Activated B cell treated with CpG ODN at 0.5 μM for 24 hours (primary cell): ENCODE measurements at regions of chr7 and their contacts with region 1.

Region 1: DNA sequence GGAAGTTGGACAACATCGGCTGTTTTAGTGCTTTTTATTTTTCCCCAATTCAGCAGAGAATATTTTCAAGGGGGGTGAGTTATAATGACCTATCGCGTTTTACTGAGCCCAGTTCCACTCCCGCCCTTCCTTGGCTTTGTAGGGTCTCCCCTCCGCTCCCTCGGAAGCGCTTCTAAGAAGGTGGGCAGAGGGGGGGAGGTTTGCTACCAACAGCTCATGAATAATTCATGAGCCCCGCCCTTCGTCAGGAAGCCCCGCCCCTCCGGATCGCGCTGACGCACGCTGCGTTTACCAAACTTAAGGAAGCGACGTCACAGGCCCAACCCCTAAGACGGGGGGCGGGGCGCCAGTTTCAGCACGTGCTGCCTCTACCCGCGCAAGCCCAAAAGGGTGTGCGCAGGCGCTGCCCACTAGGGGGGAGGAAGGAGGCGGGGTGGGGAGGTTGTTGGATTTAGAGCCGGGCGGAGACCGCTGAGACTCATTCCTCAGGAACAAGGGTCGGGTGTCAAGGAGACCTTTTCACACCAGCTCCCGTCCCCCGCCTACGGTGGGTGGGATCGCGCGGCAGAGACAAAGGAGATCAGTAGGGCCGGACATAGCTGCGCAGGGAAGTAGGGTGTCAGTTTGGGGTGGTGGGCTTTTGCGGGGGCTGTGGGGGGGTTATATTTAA is 529 bp upstream of the MEPCE start:
- DNase-seq: peak; percentile 100
- ATAC-seq: peak; percentile 58
- H3K4me3 Mint-ChIP-seq: peak overlapping the region; percentile 98
- H3K27ac Mint-ChIP-seq: peak overlapping the region; percentile 100
- H3K4me1 Mint-ChIP-seq: peaks cover 45% of the 10 kb centered on the region
- H3K27me3 Mint-ChIP-seq: no peaks in the 10 kb centered on the region
- CTCF ChIP-seq: no peak

Region 2: DNA sequence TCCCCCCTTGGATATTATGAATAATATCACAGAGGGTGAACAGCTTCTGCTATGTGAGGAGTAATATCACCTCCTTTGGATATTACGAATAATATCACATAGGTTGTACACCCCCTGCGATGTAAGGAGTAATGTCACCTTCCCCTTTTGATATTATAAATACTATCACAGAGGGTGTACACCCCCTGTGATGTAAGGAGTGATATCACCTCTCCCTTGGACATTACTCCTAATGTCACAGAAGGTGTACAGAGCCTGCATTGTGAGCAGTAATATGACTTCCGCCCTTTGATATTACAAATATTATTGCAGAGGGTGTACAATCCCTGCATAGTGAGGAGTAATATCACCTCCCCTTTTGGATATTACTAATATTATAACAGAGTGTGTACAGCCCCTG is 840.2 kb before region 1 on chr7:
- CTCF ChIA-PET with region 1: no interaction called
- POLR2A ChIA-PET with region 1: no interaction called
- intact Hi-C with region 1: no loop called
- DNase-seq: no peak
- ATAC-seq: no peak
- H3K4me3 Mint-ChIP-seq: no peak overlapping the region
- H3K27ac Mint-ChIP-seq: no peak overlapping the region
- H3K4me1 Mint-ChIP-seq: no peaks in the 10 kb centered on the region
- H3K27me3 Mint-ChIP-seq: no peaks in the 10 kb centered on the region
- CTCF ChIP-seq: no peak

Region 3: GRCh38 chr7:100126931-100127865 is 301.9 kb before region 1 on chr7 and contains the start of gene MBLAC1:
- CTCF ChIA-PET with region 1: no interaction called
- POLR2A ChIA-PET with region 1: interaction called, 11 read pairs
- intact Hi-C with region 1: loop called (anchors 2 kb)
- DNase-seq: peak; percentile 81
- ATAC-seq: peak; percentile 85
- H3K4me3 Mint-ChIP-seq: peak within 1 kb of the TSS; percentile 100
- H3K27ac Mint-ChIP-seq: peak within 1 kb of the TSS; percentile 100
- H3K4me1 Mint-ChIP-seq: peaks cover 41% of the 10 kb centered on the region
- H3K27me3 Mint-ChIP-seq: no peaks in the 10 kb centered on the region
- CTCF ChIP-seq: no peak
- total RNA-seq, gene MBLAC1: 1.9 and 2.2 TPM in 2 replicates

Region 4: DNA sequence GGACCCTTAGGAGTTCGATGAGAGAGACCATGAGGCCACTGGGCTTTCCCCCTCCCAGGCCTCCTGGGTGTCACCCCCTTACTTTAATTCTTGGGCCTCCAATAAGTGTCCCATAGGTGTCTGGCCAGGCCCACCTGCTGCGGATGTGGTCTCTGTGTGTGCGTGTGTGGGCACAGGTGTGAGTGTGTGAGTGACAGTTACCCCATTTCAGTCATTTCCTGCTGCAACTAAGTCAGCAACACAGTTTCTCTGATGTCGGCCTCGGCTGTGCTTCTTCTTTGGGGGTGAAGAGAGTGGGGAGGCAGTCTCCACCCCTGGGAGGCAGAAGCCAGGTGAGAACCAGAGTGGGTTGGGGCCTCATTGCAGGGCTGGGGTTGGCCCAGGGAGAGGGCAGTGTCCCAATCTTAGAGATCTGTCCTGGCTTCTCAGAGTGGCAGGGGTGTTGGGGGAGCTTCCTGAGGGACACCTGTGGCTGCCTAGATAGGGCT is 207.8 kb before region 1 on chr7:
- CTCF ChIA-PET with region 1: no interaction called
- POLR2A ChIA-PET with region 1: interaction called, 6 read pairs
- intact Hi-C with region 1: loop called (anchors 2 kb)
- DNase-seq: peak; percentile 48
- ATAC-seq: peak; percentile 40
- H3K4me3 Mint-ChIP-seq: peak overlapping the region; percentile 86
- H3K27ac Mint-ChIP-seq: peak overlapping the region; percentile 95
- H3K4me1 Mint-ChIP-seq: peaks cover 84% of the 10 kb centered on the region
- H3K27me3 Mint-ChIP-seq: no peaks in the 10 kb centered on the region
- CTCF ChIP-seq: no peak

Region 5: GRCh38 chr7:100407285-100408180 is 21.6 kb before region 1 on chr7:
- CTCF ChIA-PET with region 1: interaction called, 16 read pairs
- POLR2A ChIA-PET with region 1: interaction called, 34 read pairs
- intact Hi-C with region 1: no loop called
- DNase-seq: no peak
- ATAC-seq: peak; percentile 96
- H3K4me3 Mint-ChIP-seq: no peak overlapping the region
- H3K27ac Mint-ChIP-seq: no peak overlapping the region
- H3K4me1 Mint-ChIP-seq: peaks cover 7% of the 10 kb centered on the region
- H3K27me3 Mint-ChIP-seq: no peaks in the 10 kb centered on the region
- CTCF ChIP-seq: peak; percentile 54

Region 6: GRCh38 chr7:100478966-100479665 is 50.0 kb after region 1 on chr7 and contains the start of gene TSC22D4:
- CTCF ChIA-PET with region 1: no interaction called
- POLR2A ChIA-PET with region 1: interaction called, 38 read pairs
- intact Hi-C with region 1: loop called (anchors 1 kb)
- DNase-seq: peak; percentile 81
- ATAC-seq: peak; percentile 73
- H3K4me3 Mint-ChIP-seq: peak within 1 kb of the TSS; percentile 93
- H3K27ac Mint-ChIP-seq: peak within 1 kb of the TSS; percentile 86
- H3K4me1 Mint-ChIP-seq: peaks cover 41% of the 10 kb centered on the region
- H3K27me3 Mint-ChIP-seq: no peaks in the 10 kb centered on the region
- CTCF ChIP-seq: no peak
- total RNA-seq, gene TSC22D4: 60.2 and 68.7 TPM in 2 replicates

Region 7: DNA sequence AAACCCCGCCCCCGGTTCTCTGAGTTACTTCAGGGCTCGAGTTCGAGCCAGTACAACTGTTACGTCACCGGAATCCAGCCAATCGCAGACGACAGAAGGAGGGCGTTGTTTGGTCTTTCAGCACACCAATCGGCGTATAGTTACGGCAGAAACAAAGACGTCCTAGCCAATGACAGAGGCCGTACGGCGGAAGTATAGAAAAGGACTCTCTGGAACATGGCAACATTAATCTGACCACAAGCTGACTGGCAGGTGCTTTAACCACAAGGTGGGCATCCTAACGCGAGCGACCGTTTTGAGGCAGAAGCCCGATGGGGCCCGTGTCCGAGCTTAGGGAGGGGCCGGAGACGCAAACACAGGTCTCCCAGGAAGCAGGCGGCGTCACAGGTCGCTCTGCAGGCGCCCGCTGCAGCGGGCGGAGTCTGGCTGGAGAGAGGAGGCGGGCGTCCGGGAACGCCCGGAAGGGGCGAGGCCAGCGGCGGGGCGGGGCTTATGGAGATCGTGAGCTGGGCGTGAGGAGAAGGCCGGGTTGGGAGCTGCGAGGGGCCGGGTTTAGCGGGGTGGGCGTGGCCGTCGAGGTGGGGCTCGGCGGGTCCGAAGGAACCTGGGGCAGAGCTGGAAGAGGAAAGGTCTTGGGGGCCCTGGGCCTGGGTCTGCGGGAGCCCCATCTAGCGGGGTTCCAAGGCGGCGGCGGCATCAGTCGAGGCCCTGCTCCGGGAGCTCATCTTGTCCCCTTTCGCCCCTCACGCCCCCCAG is 183.1 kb after region 1 on chr7 and contains the start of gene MOSPD3:
- CTCF ChIA-PET with region 1: no interaction called
- POLR2A ChIA-PET with region 1: interaction called, 18 read pairs
- intact Hi-C with region 1: no loop called
- DNase-seq: peak; percentile 99
- ATAC-seq: peak; percentile 91
- H3K4me3 Mint-ChIP-seq: peak within 1 kb of the TSS; percentile 99
- H3K27ac Mint-ChIP-seq: peak within 1 kb of the TSS; percentile 100
- H3K4me1 Mint-ChIP-seq: peaks cover 19% of the 10 kb centered on the region
- H3K27me3 Mint-ChIP-seq: no peaks in the 10 kb centered on the region
- CTCF ChIP-seq: no peak
- total RNA-seq, gene MOSPD3: 10.5 and 11.9 TPM in 2 replicates

Region 8: GRCh38 chr7:101251871-101252659 is 823.0 kb after region 1 on chr7:
- CTCF ChIA-PET with region 1: no interaction called
- POLR2A ChIA-PET with region 1: no interaction called
- intact Hi-C with region 1: loop called (anchors 10 kb)
- DNase-seq: peak; percentile 98
- ATAC-seq: peak; percentile 100
- H3K4me3 Mint-ChIP-seq: peak overlapping the region; percentile 100
- H3K27ac Mint-ChIP-seq: peak overlapping the region; percentile 96
- H3K4me1 Mint-ChIP-seq: peaks cover 29% of the 10 kb centered on the region
- H3K27me3 Mint-ChIP-seq: peaks cover 8% of the 10 kb centered on the region
- CTCF ChIP-seq: no peak